Gastrocnemius medialis (tissue), 4 donors: ENCODE measurements at regions of chr6 and their contacts with region 1.

Region 1: GRCh38 chr6:46427482-46427881 is 63.8 kb downstream of the RCAN2 start:
- DNase-seq: no peak
- ATAC-seq: no peak
- H3K4me3 ChIP-seq: no peak overlapping the region
- H3K27ac ChIP-seq: no peak overlapping the region
- H3K4me1 ChIP-seq: peaks cover 15 to 24% of the 10 kb centered on the region in 2 donors
- H3K27me3 ChIP-seq: no peaks in the 10 kb centered on the region
- CTCF ChIP-seq: no peak
- POLR2A ChIP-seq: no peak

Region 2: GRCh38 chr6:46486181-46486580 is 58.7 kb after region 1 on chr6:
- in situ Hi-C with region 1: loop called in 2 of 4 experiments (anchors 5 to 10 kb)
- intact Hi-C with region 1: no loop called
- DNase-seq: no peak
- ATAC-seq: no peak
- H3K4me3 ChIP-seq: no peak overlapping the region
- H3K27ac ChIP-seq: peak overlapping the region in 2 of 4 donors; percentile 34 to 37
- H3K4me1 ChIP-seq: peaks cover 26 to 65% of the 10 kb centered on the region in 2 donors
- H3K27me3 ChIP-seq: no peaks in the 10 kb centered on the region
- CTCF ChIP-seq: no peak
- POLR2A ChIP-seq: no peak